Activated T-helper 2 cell treated with anti-CD3 and anti-CD28 coated beads, Interferon-gamma antibody, Interleukin-2, Interleukin-4, amounts not matched to agents 10 μg/mL and 5 μg/mL and 100 μg/mL, durations not matched to agents 14 hours and 24 hours and 36 hours (primary cell): ENCODE measurements at regions of chr13 and their contacts with region 1.

Region 1: GRCh38 chr13:46334035-46334822 is 52.8 kb downstream of the RUBCNL start:
- DNase-seq: no peak
- H3K4me3 Mint-ChIP-seq: no peak overlapping the region
- H3K27ac Mint-ChIP-seq: peak overlapping the region; percentile 62
- H3K4me1 Mint-ChIP-seq: peaks cover 64% of the 10 kb centered on the region
- H3K27me3 Mint-ChIP-seq: no peaks in the 10 kb centered on the region

Region 2: DNA sequence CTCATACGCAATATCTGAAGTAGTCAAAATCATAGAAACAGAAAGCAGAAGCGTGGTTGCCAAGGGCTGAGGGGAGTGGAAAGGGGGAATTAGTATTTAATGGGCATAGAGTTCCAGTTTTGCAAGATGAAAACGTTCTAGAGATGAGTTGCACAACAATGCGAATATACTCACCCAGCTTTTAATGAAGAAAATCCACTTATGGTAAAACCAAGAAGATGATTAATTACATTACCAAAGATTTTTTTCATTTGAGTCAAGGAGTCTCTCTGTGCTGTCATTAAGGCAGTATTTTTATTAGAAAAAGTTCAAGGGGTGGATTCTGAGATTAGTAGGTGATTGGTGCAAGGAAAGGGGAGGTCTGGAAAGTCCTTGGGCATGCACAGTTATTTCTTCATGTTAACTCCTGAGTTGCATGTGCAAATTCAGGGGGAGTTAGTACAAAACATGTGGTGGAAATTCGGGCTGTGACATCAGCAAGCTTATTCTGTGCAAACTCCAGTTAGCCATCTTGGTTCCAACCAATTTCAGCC is 639.0 kb before region 1 on chr13:
- intact Hi-C with region 1: loop called (anchors 5 kb)
- DNase-seq: no peak
- H3K4me3 Mint-ChIP-seq: no peak overlapping the region
- H3K27ac Mint-ChIP-seq: peak overlapping the region; percentile 31
- H3K4me1 Mint-ChIP-seq: peaks cover 15% of the 10 kb centered on the region
- H3K27me3 Mint-ChIP-seq: peaks cover 2% of the 10 kb centered on the region

Region 3: DNA sequence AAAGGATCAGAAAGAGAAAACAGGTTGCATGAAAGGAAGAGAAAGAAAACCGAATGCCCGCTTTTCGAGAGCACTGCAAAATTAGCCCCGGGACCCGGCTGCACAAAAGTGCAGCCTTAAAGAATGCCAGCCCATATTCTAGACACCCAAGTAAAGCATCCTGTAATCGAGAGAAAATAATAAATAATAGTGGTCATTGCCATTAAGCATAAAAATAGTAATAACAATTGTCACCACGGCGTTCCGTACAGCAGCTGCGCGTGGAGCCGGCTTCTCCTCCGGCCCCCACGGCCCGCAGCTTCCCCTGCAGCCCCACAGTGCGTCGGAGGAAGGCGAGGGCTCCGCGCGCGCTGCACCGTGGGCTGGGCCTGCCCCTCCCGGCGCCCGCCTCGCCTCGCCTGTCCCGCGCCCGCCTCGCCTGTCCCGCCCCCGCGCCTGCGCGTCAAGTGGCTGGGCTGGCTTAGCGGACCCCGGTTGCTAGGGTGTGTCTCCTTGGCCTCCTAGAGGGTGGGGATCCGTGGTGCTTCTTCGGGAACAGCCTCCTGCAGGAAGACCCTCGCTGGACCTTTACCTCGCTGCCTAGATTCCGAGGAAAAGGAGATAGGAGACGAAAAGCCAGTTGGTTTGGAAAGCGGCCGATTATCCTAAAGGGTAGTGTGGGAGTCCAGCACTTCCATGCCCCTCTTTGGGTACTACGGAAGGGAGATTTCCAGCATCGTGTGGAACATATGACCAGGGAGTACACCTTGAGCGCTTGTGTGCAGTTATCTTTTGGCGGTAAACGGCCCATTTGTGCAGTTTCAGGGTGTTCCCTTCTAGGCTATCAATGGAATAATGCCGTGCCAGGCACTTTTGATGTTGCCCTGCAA is 122.5 kb before region 1 on chr13 and contains the start of gene LRRC63:
- intact Hi-C with region 1: no loop called
- DNase-seq: peak; percentile 83
- H3K4me3 Mint-ChIP-seq: peak within 1 kb of the TSS; percentile 89
- H3K27ac Mint-ChIP-seq: peak within 1 kb of the TSS; percentile 92
- H3K4me1 Mint-ChIP-seq: peaks cover 37% of the 10 kb centered on the region
- H3K27me3 Mint-ChIP-seq: peaks cover 4% of the 10 kb centered on the region
- total RNA-seq, gene LRRC63: 0.52 and 0.71 TPM in 2 replicates